Psoas muscle (tissue), 8 donors: ENCODE measurements at regions of chr10 and their contacts with region 1.

Region 1: DNA sequence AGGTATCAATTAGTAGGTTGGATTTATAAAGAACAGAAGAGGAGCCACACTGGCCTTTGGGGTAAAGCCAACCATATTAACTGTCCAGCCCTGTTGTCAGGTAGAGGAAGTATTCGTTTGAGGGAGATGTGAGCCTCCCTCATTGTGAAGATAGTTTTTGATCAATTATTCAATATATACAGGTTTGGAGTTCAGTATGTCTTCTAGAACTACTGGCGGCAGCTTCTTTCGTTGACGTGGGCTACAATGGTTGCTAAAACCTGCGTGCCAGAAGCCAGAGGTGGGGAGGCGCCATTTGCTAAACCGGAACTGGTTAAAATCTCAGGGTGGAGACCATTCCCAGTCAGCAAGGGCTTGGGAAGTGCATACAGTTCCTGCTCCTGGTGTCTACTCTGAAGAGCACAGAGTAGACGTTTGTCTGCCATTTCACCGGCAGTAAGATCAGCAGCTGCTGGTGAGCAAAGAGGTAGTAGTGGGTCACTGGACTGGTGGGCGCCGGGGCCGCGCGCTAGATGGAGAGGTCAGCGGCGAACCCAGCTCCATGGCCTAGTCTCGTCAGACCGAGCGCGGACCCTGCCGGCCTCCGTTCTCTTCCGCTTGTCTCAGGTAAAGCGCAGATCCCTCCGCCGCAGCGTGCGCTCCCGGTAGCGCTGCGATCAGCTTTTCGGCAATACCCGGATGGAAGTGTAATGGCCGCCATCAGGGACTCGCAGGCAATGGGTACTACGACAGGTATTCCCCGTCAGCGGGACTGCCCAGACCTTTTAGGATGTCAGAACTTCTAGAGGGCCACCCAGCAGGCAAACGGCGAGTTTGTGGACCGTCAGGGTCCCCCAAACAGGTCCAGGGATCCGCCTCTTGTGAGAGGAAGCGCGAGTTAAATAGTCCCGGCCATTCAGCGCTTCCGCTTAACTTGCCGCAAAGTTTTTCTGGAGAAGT is at the start of gene ZNF518A:
- DNase-seq: peak; percentile 91 to 95
- ATAC-seq: peak; percentile 97 to 99 (median 98)
- H3K4me3 ChIP-seq: peak within 1 kb of the TSS; percentile 88
- H3K27ac ChIP-seq: peak within 1 kb of the TSS; percentile 88
- H3K4me1 ChIP-seq: no peaks in the 10 kb centered on the region
- H3K27me3 ChIP-seq: peaks cover 0 to 43% (median 18%) of the 10 kb centered on the region in 3 donors
- CTCF ChIP-seq: no peak
- total RNA-seq, gene ZNF518A: 7.4 to 10.2 (median 8.2) TPM

Region 2: GRCh38 chr10:96089670-96090462 is 39.8 kb before region 1 on chr10:
- intact Hi-C with region 1: loop called (anchors 1 kb)
- DNase-seq: peak; percentile 96
- ATAC-seq: peak; percentile 95 to 99 (median 98)
- H3K4me3 ChIP-seq: peak overlapping the region; percentile 75
- H3K27ac ChIP-seq: peak overlapping the region; percentile 82
- H3K4me1 ChIP-seq: no peaks in the 10 kb centered on the region
- H3K27me3 ChIP-seq: peaks cover 11 to 41% (median 15%) of the 10 kb centered on the region in 3 donors
- CTCF ChIP-seq: no peak

Region 3: DNA sequence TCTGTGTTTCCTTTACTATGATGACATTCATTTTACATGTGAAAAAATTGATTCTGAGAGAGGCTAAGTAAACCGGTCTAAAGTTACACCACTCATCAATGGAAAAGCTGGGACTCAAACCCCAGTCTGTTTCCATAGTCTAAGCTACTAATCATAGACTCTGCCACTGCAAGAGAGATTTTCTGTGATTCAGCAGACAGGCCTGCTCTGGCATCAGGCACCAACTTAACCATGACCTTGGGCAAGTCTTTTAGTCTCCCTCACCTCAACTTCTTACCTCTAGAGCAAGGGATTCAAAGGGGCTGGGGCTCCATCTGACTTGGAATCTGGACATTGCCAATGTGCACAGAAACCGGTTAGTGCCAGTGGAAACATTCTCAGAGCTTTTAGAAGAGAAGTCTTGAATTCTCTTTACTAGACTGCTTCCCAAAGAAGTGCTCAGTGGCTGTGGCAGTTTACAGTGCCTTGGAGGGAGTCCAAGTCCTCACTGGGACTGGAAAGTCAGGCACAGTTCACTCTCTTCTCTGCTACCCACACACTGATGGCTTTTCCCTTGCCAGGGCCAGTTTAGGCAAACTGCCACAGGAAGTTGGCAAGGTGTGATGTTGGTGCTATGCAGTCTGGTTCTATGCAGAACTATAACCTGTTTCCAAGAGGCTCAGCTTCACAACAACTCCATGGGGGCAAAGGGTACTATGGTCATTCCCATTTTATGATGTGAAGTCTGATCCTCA is 146.2 kb after region 1 on chr10:
- intact Hi-C with region 1: no loop called
- DNase-seq: no peak
- ATAC-seq: peak in 1 of 4 donors; percentile 43
- H3K4me3 ChIP-seq: no peak overlapping the region
- H3K27ac ChIP-seq: no peak overlapping the region
- H3K4me1 ChIP-seq: peaks cover 3% of the 10 kb centered on the region
- H3K27me3 ChIP-seq: no peaks in the 10 kb centered on the region
- CTCF ChIP-seq: no peak